ENCODE measurements at regions of chr7 and their contacts with region 1.

Region 1: GRCh38 chr7:151315038-151315655 is 26.5 kb upstream of the NUB1 start:
- DNase-seq: peak; percentile 65
- H3K4me3 Mint-ChIP-seq: no peak overlapping the region
- H3K27ac Mint-ChIP-seq: no peak overlapping the region
- H3K4me1 Mint-ChIP-seq: no peaks in the 10 kb centered on the region
- H3K27me3 Mint-ChIP-seq: no peaks in the 10 kb centered on the region
- CTCF ChIP-seq: peak; percentile 72

Region 2: DNA sequence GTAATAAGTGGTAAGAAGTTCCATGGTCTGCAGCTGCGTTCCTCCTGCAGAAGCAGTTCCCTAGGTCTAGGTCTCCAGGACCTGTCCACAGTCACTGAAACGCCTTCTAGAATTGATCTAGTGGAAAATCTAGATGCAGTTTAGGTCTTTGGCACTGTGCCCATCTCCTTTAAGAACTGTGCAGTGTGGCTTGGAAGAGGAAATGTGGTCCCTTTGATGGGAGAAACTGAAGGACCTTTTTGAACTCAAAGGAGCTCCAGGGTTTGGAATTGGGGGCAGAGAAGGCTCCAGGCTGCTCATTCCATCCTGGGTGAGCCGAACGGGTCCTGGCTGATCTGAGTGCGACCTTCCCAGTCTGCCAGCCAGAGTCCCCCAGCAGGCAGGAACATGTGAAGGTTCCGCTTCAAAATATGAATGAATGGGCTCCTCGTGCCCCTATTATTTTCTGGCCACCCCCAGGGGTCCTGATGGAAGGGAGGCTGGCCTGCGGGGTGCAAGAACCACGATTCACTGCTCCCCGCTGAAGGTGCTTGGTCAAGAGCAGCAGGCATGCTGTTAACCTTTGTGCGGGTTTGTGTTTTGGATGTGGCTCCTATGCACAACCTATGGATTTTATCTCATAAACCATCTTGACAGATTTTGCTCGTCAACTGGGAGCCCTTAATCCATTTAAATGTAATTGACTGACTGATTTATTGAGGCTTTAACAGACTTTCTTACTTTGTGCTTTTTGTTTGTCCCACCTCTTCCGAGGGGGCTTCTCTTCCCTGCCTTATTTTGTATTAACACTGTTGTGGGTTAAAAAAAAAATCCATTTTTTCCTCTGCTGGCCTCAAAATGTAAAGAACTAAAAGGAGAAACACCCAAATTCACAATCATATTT is 1578.4 kb before region 1 on chr7:
- CTCF ChIA-PET with region 1: no interaction called
- POLR2A ChIA-PET with region 1: no interaction called
- intact Hi-C with region 1: no loop called
- DNase-seq: no peak
- H3K4me3 Mint-ChIP-seq: no peak overlapping the region
- H3K27ac Mint-ChIP-seq: no peak overlapping the region
- H3K4me1 Mint-ChIP-seq: peaks cover 11% of the 10 kb centered on the region
- H3K27me3 Mint-ChIP-seq: no peaks in the 10 kb centered on the region
- CTCF ChIP-seq: no peak

Region 3: DNA sequence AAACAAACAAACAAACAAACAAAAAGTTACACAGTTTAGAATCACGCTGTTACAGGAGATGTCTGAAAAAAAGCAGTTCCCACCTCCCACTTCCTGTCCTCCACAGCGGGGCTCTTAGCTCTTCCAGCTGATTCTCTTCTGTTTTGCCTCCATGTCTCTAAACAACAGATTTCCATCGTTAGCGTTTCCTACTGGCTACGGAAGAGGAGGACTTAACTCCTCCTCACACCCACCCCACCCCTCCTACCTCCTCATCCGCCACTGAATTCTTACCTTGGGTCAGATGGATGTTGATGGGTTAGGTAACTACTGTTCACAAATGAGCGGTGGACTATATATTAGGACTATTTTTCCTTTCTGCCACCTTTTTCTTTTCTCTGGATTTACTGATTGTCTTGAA is 10.3 kb before region 1 on chr7:
- CTCF ChIA-PET with region 1: interaction called, 28 read pairs
- POLR2A ChIA-PET with region 1: interaction called, 3 read pairs
- intact Hi-C with region 1: no loop called
- DNase-seq: no peak
- H3K4me3 Mint-ChIP-seq: no peak overlapping the region
- H3K27ac Mint-ChIP-seq: no peak overlapping the region
- H3K4me1 Mint-ChIP-seq: peaks cover 7% of the 10 kb centered on the region
- H3K27me3 Mint-ChIP-seq: peaks cover 57% of the 10 kb centered on the region
- CTCF ChIP-seq: no peak

Region 4: GRCh38 chr7:151327659-151328058 is 12.5 kb after region 1 on chr7:
- CTCF ChIA-PET with region 1: interaction called, 68 read pairs
- POLR2A ChIA-PET with region 1: interaction called, 5 read pairs
- intact Hi-C with region 1: no loop called
- DNase-seq: peak; percentile 36
- H3K4me3 Mint-ChIP-seq: no peak overlapping the region
- H3K27ac Mint-ChIP-seq: no peak overlapping the region
- H3K4me1 Mint-ChIP-seq: no peaks in the 10 kb centered on the region
- H3K27me3 Mint-ChIP-seq: peaks cover 24% of the 10 kb centered on the region
- CTCF ChIP-seq: no peak

Region 5: GRCh38 chr7:151342102-151342646 is 27.0 kb after region 1 on chr7:
- CTCF ChIA-PET with region 1: interaction called, 240 read pairs
- POLR2A ChIA-PET with region 1: interaction called, 6 read pairs
- intact Hi-C with region 1: no loop called
- DNase-seq: no peak
- H3K4me3 Mint-ChIP-seq: peak overlapping the region; percentile 77
- H3K27ac Mint-ChIP-seq: peak overlapping the region; percentile 35
- H3K4me1 Mint-ChIP-seq: no peaks in the 10 kb centered on the region
- H3K27me3 Mint-ChIP-seq: no peaks in the 10 kb centered on the region
- CTCF ChIP-seq: no peak

Region 6: DNA sequence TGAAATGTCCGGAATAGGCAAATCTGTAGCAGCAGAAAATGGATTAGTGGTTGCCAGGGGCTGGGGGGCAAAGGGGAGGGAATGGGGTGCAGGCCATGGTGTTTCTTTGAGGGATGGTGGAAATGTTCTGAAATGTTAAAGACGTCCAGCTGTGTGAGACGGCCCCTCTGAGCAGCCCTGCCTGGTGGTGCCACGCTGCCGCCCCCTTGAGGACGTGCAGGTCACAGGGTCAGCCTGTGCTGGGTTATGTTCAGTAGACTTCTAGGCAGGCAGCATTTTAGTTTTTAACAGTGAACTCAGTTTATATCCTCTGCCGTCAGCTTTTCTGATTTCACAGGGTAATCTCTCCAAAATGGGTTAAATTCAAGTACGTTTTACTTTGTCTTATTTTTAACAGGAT is 35.9 kb after region 1 on chr7:
- CTCF ChIA-PET with region 1: interaction called, 240 read pairs
- POLR2A ChIA-PET with region 1: interaction called, 6 read pairs
- intact Hi-C with region 1: loop called (anchors 1 kb)
- DNase-seq: no peak
- H3K4me3 Mint-ChIP-seq: no peak overlapping the region
- H3K27ac Mint-ChIP-seq: no peak overlapping the region
- H3K4me1 Mint-ChIP-seq: peaks cover 8% of the 10 kb centered on the region
- H3K27me3 Mint-ChIP-seq: no peaks in the 10 kb centered on the region
- CTCF ChIP-seq: peak; percentile 19

Region 7: DNA sequence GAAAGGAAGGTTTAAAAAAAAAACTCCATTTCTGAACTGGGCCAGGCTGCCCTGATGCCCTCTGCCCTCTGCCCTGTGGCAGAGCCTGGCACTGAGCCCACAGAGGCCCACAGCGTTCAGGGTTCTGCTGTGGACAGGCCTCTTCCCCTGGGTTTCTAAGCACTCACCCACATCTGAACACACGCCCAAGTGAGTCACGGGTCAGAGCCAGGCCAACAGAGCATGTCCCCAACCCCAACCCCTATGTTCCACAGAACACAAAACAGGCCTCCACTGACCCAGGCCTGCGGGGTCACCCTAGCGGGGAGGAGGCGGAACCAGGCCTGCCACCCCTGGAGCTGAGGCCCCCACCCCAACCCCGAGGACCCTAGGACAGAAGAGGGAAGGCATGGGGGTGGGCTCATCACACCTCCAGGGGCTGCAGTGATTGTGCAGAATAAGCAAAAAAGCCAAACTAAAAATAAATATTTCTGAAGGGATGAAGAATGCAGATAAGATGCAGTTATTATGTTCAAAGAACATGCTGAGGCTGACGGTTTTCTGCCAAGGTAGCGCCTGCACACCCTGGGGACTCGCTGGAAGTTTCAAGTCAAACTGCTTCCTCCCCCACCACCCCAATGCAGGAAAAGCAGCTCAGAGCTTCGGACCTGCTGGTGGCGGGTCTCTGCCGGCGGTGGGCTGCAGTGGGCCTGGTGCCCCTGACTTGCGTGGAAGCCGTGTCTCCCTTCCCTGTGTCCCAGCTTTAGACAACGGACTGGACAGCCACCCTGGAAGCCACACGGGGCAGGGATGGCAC is 89.3 kb after region 1 on chr7:
- CTCF ChIA-PET with region 1: no interaction called
- POLR2A ChIA-PET with region 1: no interaction called
- intact Hi-C with region 1: no loop called
- DNase-seq: peak; percentile 61
- H3K4me3 Mint-ChIP-seq: no peak overlapping the region
- H3K27ac Mint-ChIP-seq: no peak overlapping the region
- H3K4me1 Mint-ChIP-seq: peaks cover 9% of the 10 kb centered on the region
- H3K27me3 Mint-ChIP-seq: peaks cover 12% of the 10 kb centered on the region
- CTCF ChIP-seq: no peak